ENCODE measurements at regions of chr17 and their contacts with region 1.

Region 1: DNA sequence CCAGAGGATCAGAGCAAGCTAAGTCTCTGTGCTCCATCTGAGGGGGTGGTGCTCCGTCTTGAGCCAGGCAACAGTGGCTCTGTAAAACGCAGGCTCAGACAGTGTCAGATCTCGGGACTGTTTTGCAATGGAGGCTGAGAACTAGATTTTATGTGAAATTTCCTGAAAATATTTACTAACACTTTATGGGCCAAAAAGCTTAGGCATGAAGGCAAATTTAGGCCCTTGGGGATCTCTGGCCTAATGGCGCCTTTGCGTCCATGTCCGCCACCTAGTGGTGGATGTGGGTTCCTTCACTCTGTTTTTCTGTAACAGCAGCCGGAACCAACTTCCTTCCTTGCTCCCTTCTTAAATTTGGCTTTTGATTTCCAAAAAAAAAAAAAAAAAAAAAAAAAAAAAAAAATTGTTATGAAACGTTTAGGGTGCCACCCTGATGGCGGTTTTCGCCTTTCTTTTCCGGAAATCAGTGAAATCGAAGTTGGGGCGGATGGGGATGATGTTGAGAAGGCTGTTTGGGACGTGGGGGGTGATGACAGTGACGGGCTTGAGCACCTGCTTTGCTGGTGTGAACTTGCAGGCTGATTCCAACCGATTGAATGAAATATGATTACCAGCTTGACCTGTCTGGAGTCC is 14.0 kb upstream of the ELAC2 start:
- DNase-seq: peak; percentile 66
- ATAC-seq: peak; percentile 65
- H3K4me3 Mint-ChIP-seq: no peak overlapping the region
- H3K27ac Mint-ChIP-seq: peak overlapping the region; percentile 51
- H3K4me1 Mint-ChIP-seq: peaks cover 11% of the 10 kb centered on the region
- H3K27me3 Mint-ChIP-seq: peaks cover 5% of the 10 kb centered on the region

Region 2: DNA sequence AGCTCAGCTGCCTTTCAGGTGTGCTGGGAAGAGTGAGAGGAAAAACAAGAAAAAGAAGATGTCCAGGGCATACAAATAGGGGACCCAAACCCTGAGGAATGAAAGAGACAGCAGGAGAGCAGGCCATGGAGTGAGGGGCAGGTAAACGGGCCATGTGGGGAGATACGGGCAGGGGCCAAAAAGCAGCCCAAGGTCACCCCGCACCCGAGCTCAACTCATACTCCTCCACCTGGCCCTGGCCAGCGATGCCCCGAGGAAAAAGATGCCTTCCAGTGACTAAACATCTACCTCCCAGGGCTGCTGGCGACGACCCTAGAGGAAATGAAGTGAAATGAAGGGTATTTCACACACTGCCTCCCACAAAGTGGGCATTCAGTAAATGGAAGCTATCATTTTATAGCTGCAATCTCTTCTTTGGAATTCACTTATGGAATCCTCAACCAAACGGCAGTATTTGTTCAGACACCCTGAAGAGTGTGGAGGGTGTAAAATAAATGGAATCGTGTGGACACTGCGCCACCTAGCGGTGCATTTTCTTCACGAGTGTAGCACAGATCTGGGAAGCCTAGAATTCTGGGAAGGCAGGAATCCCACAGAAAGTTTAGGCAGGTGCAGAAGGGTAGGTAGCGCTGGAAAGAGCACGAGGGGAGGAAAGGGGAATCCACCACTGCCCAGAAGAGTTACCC is 28.9 kb before region 1 on chr17:
- CTCF ChIA-PET with region 1: interaction called, 11 read pairs
- POLR2A ChIA-PET with region 1: no interaction called
- DNase-seq: peak; percentile 53
- ATAC-seq: peak; percentile 55
- H3K4me3 Mint-ChIP-seq: no peak overlapping the region
- H3K27ac Mint-ChIP-seq: no peak overlapping the region
- H3K4me1 Mint-ChIP-seq: peaks cover 1% of the 10 kb centered on the region
- H3K27me3 Mint-ChIP-seq: no peaks in the 10 kb centered on the region

Region 3: DNA sequence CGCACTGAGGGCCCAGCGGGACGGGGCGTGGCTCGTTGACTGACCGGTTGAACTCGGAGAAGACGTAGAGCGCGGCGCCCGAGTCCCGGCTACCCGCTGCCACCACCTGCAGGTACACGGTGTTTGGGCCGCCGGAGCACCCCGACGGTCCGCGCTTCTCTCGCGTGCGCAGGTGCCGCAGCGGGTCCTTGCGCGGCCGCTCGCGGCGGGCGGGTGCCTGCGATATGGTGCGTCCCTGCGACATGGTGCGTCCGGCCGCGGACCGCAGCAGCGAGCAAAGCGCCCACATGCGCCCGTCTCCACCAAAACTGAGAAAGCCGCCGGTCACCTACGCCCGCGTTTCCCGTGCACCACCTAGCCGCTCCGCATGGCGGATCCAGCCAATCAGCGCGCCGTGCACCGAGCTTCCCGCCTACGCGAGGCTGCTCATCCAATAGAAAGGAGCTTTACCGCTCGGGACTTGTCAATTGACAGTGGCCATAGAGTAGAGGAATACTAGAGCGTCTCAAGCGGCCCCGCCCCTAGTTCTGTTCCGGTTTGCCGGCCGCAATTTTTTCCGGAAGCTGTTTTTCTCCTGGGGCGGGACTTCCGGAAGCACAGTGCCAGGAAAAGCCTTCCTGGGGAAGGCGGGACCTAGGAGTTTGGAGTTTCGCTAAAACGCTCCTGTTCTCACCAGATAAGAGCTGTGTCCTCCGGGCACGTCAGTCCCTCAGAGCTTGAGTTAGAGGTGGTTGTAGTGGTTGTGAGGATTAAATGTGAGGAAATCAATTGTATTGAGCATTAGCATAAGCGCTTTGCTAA is 14.0 kb before region 1 on chr17 and contains the start of gene ELAC2:
- CTCF ChIA-PET with region 1: interaction called, 167 read pairs
- POLR2A ChIA-PET with region 1: interaction called, 12 read pairs
- DNase-seq: peak; percentile 96
- ATAC-seq: peak; percentile 100
- H3K4me3 Mint-ChIP-seq: peak within 1 kb of the TSS; percentile 98
- H3K27ac Mint-ChIP-seq: peak within 1 kb of the TSS; percentile 93
- H3K4me1 Mint-ChIP-seq: peaks cover 25% of the 10 kb centered on the region
- H3K27me3 Mint-ChIP-seq: no peaks in the 10 kb centered on the region
- total RNA-seq, gene ELAC2: 62.6 to 70.2 TPM

Region 4: GRCh38 chr17:13044572-13045065 is 12.8 kb after region 1 on chr17:
- CTCF ChIA-PET with region 1: interaction called, 35 read pairs
- POLR2A ChIA-PET with region 1: no interaction called
- DNase-seq: no peak
- ATAC-seq: no peak
- H3K4me3 Mint-ChIP-seq: no peak overlapping the region
- H3K27ac Mint-ChIP-seq: no peak overlapping the region
- H3K4me1 Mint-ChIP-seq: no peaks in the 10 kb centered on the region
- H3K27me3 Mint-ChIP-seq: no peaks in the 10 kb centered on the region